Colonic mucosa (tissue), 4 donors: ENCODE measurements at regions of chr6 and their contacts with region 1.

Region 1: DNA sequence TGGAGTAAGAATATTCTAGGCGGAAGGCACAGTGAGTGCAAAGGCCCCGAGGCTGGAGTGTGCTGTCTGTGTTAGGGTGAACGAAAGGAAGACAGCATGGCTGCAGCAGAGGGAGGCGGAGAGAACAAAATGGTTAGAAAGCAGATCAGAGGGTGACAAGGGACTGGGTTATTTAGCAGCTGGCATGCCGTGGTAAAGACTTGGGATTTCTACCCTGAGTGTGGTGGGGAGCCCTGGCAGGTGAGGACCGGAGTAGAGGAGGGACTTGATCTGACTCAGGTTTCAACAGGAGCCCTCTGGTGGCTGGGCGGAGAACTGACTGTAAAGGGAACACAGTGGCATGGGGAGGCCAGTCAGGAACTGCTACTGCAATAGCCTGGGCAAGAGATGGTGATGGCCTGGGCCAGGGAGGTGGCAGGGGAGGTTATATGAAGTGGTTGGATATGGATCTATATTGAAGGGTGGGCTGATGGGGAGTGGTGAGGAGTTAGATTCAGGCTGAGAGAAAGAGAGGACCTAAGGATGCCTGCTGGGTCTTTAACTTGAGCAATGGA is 38.0 kb downstream of the PIM1 start:
- DNase-seq: peak; percentile 94
- H3K4me3 ChIP-seq: no peak overlapping the region
- H3K27ac ChIP-seq: no peak overlapping the region
- H3K4me1 ChIP-seq: no peaks in the 10 kb centered on the region
- H3K27me3 ChIP-seq: no peaks in the 10 kb centered on the region
- CTCF ChIP-seq: peak; percentile 81

Region 2: DNA sequence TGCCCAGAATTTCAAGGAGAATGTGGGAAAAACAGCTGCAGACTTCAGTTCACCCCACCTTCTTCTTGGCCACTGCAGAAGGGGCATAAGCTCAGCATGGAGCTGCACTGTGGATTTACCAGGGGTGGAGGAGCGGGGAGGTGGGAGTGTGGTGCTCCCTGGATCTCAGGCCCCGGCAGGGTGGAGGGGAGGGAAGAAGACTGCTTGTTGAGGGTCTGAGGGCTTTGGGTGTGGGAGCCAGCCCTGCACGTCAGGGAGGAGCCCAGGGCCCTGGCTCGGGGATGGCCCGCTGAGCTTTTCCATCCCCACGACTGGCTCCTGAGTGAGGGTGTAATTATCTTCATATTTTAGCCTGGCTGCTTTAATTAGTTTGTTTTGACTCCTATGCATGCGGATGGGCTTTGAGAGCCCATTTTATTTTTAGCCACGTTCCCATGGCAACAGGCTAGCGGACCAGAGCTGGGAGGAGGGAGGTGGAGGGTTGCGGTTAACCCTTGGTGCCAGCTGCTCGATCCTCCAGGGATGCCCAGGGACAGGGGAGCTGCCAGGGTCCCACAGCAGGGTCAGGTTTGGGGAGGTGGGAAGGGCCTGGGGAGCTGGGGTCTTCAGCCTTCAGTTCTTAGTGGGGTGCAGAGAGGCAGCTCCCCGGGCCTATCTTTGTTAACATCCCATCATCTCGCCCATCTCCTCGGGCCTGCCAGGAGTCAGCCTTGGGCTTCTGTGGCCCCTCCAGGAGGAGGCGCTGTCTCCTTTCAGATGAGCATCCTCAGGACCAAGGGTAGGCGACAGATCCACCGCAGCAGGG is 442.2 kb before region 1 on chr6:
- intact Hi-C with region 1: loop called (anchors 5 kb)
- DNase-seq: peak; percentile 87
- H3K4me3 ChIP-seq: no peak overlapping the region
- H3K27ac ChIP-seq: no peak overlapping the region
- H3K4me1 ChIP-seq: no peaks in the 10 kb centered on the region
- H3K27me3 ChIP-seq: no peaks in the 10 kb centered on the region
- CTCF ChIP-seq: peak; percentile 82

Region 3: GRCh38 chr6:36885461-36886401 is 322.2 kb before region 1 on chr6 and contains the start of gene C6orf89:
- intact Hi-C with region 1: loop called (anchors 5 kb)
- DNase-seq: peak; percentile 99
- H3K4me3 ChIP-seq: peak within 1 kb of the TSS; percentile 71
- H3K27ac ChIP-seq: peak within 1 kb of the TSS; percentile 62
- H3K4me1 ChIP-seq: no peaks in the 10 kb centered on the region
- H3K27me3 ChIP-seq: no peaks in the 10 kb centered on the region
- CTCF ChIP-seq: peak; percentile 67
- total RNA-seq, gene C6orf89: 46.3 to 49.5 TPM

Region 4: GRCh38 chr6:36963451-36964290 is 244.3 kb before region 1 on chr6:
- intact Hi-C with region 1: no loop called
- DNase-seq: no peak
- H3K4me3 ChIP-seq: no peak overlapping the region
- H3K27ac ChIP-seq: no peak overlapping the region
- H3K4me1 ChIP-seq: no peaks in the 10 kb centered on the region
- H3K27me3 ChIP-seq: no peaks in the 10 kb centered on the region
- CTCF ChIP-seq: no peak

Region 5: GRCh38 chr6:37018198-37019064 is 189.5 kb before region 1 on chr6:
- intact Hi-C with region 1: loop called (anchors 2 kb)
- DNase-seq: peak; percentile 92
- H3K4me3 ChIP-seq: no peak overlapping the region
- H3K27ac ChIP-seq: no peak overlapping the region
- H3K4me1 ChIP-seq: no peaks in the 10 kb centered on the region
- H3K27me3 ChIP-seq: no peaks in the 10 kb centered on the region
- CTCF ChIP-seq: peak; percentile 79

Region 6: GRCh38 chr6:37051138-37052026 is 156.6 kb before region 1 on chr6:
- intact Hi-C with region 1: loop called (anchors 10 kb)
- DNase-seq: peak; percentile 94
- H3K4me3 ChIP-seq: no peak overlapping the region
- H3K27ac ChIP-seq: peak overlapping the region; percentile 53
- H3K4me1 ChIP-seq: peaks cover 14% of the 10 kb centered on the region
- H3K27me3 ChIP-seq: no peaks in the 10 kb centered on the region
- CTCF ChIP-seq: peak; percentile 90

Region 7: DNA sequence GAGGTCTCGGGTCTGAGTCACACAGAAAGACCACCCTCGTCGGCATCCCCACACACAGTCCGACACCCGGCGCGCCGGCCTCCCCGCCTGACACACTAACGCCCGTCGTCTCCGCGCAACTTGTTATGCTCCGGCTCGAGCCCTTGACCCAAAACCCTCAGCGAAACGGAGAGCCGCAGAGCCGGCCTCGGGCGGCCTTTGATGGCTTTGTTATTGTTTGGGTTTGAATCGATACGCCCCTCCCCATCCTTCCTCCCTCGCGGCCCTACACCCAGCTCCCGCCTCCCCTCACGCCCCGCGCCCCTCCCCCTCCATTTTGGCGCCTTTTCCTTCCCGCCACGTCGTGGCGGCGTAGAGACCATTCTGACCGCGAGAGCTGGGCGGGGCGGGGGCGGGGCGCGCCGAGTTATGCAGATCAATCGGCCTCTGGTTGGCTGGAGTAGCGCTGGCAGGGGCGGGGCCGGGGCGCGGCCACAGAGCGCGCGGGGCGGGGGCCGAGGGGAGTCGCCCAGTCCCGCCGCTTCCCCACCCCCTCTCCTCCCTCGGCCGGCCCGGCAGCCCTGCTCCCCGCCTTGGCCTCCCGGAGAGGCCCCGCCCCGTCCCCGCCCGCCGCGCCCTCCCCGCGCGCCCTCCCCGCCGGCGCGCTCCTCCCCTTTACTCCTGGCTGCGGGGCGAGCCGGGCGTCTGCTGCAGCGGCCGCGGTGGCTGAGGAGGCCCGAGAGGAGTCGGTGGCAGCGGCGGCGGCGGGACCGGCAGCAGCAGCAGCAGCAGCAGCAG is 38.3 kb before region 1 on chr6 and contains the start of gene PIM1:
- intact Hi-C with region 1: loop called (anchors 5 kb)
- DNase-seq: peak; percentile 100
- H3K4me3 ChIP-seq: peak within 1 kb of the TSS; percentile 90
- H3K27ac ChIP-seq: peak within 1 kb of the TSS; percentile 94
- H3K4me1 ChIP-seq: no peaks in the 10 kb centered on the region
- H3K27me3 ChIP-seq: no peaks in the 10 kb centered on the region
- CTCF ChIP-seq: no peak
- total RNA-seq, gene PIM1: 15.6 to 26.2 TPM

Region 8: GRCh38 chr6:37239950-37240713 is 32.2 kb after region 1 on chr6:
- intact Hi-C with region 1: no loop called
- DNase-seq: peak; percentile 94
- H3K4me3 ChIP-seq: no peak overlapping the region
- H3K27ac ChIP-seq: peak overlapping the region; percentile 53
- H3K4me1 ChIP-seq: peaks cover 10% of the 10 kb centered on the region
- H3K27me3 ChIP-seq: no peaks in the 10 kb centered on the region
- CTCF ChIP-seq: no peak

Region 9: GRCh38 chr6:37365762-37366161 is 157.8 kb after region 1 on chr6:
- intact Hi-C with region 1: no loop called
- DNase-seq: no peak
- H3K4me3 ChIP-seq: no peak overlapping the region
- H3K27ac ChIP-seq: no peak overlapping the region
- H3K4me1 ChIP-seq: no peaks in the 10 kb centered on the region
- H3K27me3 ChIP-seq: no peaks in the 10 kb centered on the region
- CTCF ChIP-seq: no peak